Transverse colon (tissue), 4 donors: ENCODE measurements at regions of chr3 and their contacts with region 1.

Region 1: GRCh38 chr3:59273976-59274375 is 224.2 kb upstream of the CFAP20DC start:
- DNase-seq: no peak
- H3K4me3 ChIP-seq: no peak overlapping the region
- H3K27ac ChIP-seq: no peak overlapping the region
- H3K4me1 ChIP-seq: no peaks in the 10 kb centered on the region
- H3K27me3 ChIP-seq: no peaks in the 10 kb centered on the region
- CTCF ChIP-seq: no peak
- EP300 ChIP-seq: no peak
- POLR2A ChIP-seq: no peak

Region 2: GRCh38 chr3:58857402-58857801 is 416.6 kb before region 1 on chr3:
- in situ Hi-C with region 1: no loop called
- intact Hi-C with region 1: no loop called
- DNase-seq: no peak
- H3K4me3 ChIP-seq: no peak overlapping the region
- H3K27ac ChIP-seq: no peak overlapping the region
- H3K4me1 ChIP-seq: peaks cover 0 to 12% (median 0%) of the 10 kb centered on the region in 4 donors
- H3K27me3 ChIP-seq: no peaks in the 10 kb centered on the region
- CTCF ChIP-seq: no peak
- EP300 ChIP-seq: no peak
- POLR2A ChIP-seq: no peak

Region 3: GRCh38 chr3:59334585-59334984 is 60.6 kb after region 1 on chr3:
- in situ Hi-C with region 1: loop called in 1 of 4 experiments (anchors 10 kb)
- intact Hi-C with region 1: no loop called
- DNase-seq: no peak
- H3K4me3 ChIP-seq: no peak overlapping the region
- H3K27ac ChIP-seq: no peak overlapping the region
- H3K4me1 ChIP-seq: no peaks in the 10 kb centered on the region
- H3K27me3 ChIP-seq: no peaks in the 10 kb centered on the region
- CTCF ChIP-seq: no peak
- EP300 ChIP-seq: no peak
- POLR2A ChIP-seq: no peak

Region 4: GRCh38 chr3:59450946-59451763 is 177.2 kb after region 1 on chr3:
- in situ Hi-C with region 1: no loop called
- intact Hi-C with region 1: no loop called
- DNase-seq: peak; percentile 38
- H3K4me3 ChIP-seq: no peak overlapping the region
- H3K27ac ChIP-seq: peak overlapping the region; percentile 18 to 70 (median 30)
- H3K4me1 ChIP-seq: no peaks in the 10 kb centered on the region
- H3K27me3 ChIP-seq: no peaks in the 10 kb centered on the region
- CTCF ChIP-seq: no peak
- EP300 ChIP-seq: no peak
- POLR2A ChIP-seq: no peak

Region 5: DNA sequence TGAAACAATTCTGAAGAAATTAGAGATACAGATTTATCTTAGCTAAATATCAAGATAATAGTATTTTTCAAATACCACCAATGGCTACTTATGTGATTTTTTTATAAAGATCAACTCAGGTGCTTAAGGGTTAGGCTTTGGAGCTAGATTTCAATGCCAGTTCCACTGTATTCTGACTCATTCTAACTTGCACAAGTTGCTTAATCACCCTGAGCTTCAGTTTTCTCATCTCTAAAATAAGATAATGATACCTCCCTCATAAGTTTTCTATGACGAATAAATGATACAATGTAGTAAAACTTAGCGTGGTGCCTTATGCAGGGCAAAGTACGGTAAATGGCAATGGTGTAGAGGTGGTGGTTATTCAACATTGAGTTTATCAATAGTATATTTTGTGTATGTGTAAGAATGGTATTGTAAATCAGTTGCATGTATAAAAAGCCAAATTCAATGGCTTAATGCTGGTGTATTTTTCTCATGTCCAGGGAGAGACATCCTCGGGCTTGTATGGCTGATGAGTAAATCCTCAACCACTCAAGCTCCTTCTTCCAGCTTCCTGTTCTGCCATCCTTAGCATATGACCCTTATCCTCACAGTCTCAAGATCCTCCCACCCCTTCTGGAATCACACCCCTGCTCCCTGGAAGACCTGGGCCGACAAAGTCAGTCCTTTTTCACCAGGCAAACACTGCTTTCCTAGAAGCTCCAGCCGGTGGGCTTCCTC is 281.8 kb after region 1 on chr3:
- in situ Hi-C with region 1: no loop called
- intact Hi-C with region 1: no loop called
- DNase-seq: no peak
- H3K4me3 ChIP-seq: no peak overlapping the region
- H3K27ac ChIP-seq: no peak overlapping the region
- H3K4me1 ChIP-seq: no peaks in the 10 kb centered on the region
- H3K27me3 ChIP-seq: no peaks in the 10 kb centered on the region
- CTCF ChIP-seq: no peak
- EP300 ChIP-seq: no peak
- POLR2A ChIP-seq: no peak